Naive thymus-derived CD8-positive, alpha-beta T cell (primary cell): ENCODE measurements at regions of chr6 and their contacts with region 1.

Region 1: DNA sequence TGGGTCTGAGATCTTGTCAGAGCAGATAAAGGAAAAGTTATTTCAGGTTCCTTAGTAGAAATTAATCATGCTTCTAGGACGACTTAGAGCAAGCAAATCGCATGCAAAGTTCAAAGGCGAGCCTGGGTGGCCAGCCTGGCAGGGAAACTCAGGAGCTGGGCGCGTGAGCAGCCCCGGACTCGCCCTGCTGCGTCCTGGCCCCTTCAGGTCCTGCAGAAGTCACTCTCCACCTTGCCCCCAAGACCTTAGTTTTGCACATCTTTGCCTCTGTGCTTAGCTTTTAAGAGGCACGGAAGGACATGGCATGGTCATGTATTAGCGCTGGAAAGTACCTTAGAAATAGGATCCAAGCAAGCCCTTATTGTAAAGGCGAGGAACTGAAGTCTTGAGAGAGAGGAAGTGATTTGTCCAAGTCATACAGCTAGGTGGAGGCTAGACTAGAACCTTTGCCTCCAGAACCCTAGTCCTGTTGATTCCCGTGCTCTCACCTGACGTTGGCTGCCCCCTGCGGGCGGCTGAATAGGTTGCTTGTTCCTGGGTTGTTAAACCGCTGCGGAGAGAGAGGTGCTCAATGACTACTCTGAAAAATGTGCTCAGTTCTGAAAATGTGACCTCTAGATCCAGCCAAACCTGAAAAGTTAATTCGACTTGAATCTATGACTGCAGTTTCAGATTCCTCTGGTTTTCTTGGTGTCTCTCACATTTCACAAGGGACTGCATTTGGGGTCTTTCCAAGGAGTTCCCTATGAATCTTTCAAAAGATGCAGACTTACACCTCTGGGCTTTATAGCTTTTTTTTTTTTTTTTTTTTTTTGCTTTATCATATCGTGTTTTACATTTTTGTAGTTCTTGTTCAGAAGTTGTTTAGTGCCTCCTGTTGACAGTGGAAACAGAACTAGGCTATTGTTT is 2.7 kb downstream of the MYB start:
- DNase-seq: peak; percentile 59 to 86 (median 69)
- ATAC-seq: peak; percentile 30 to 44
- H3K4me3 Mint-ChIP-seq: peak overlapping the region; percentile 82 to 98 (median 94)
- H3K27ac Mint-ChIP-seq: peak overlapping the region; percentile 75 to 96 (median 91)
- H3K4me1 Mint-ChIP-seq: peaks cover 14 to 30% (median 20%) of the 10 kb centered on the region in 4 donors
- H3K27me3 Mint-ChIP-seq: no peaks in the 10 kb centered on the region

Region 2: DNA sequence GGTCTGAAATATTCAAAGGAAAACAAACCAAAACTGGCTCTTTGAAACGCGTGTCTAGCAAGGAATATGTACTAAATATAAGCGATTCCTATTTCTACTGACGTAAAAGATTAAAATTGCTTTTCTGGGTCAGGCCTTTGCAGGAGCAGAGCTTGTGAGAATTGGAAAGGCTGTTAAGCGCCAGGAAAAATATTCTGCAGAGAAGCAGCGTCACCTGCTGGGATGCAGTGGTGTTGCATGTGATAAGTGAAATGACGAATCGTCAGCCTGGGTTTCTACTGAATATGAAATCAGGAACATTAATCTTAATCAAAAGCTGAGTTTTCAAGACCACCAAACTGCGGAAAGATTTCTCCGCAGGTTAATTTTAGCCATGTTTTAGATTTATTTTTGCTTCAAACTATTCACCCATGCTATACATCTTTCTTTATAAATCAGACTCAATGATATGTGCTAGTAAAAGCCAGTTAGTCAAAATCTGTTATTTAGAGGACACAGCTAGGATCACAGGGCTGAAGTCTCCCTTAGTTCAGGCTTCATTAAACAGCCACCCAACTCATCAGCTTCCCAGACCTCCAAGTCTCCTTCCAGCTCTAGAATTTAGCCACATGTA is 301.3 kb before region 1 on chr6:
- POLR2A ChIA-PET with region 1: no interaction called
- DNase-seq: peak in 8 of 10 donors; percentile 23 to 74 (median 51)
- ATAC-seq: peak; percentile 41 to 43
- H3K4me3 Mint-ChIP-seq: no peak overlapping the region
- H3K27ac Mint-ChIP-seq: no peak overlapping the region
- H3K4me1 Mint-ChIP-seq: no peaks in the 10 kb centered on the region
- H3K27me3 Mint-ChIP-seq: peaks cover 0 to 18% (median 11%) of the 10 kb centered on the region in 5 donors

Region 3: DNA sequence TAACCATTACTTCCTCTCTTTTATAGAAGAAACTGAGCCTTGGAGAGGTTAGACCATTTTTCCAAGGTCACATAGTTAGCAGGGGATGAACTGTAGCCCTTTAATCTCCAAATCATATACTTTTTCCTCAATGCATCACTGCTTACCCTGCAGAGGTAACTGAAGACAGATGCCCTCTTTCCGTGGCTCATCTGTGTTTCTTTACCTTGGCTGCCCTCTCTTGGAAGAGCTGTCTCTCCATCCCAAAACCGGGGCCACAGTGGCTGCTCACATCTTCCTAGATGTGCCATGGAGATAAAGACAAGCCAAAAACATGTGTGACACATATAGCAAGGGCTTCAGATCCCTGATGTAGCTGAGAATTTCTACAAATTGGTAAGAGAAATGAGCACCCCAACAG is 233.3 kb before region 1 on chr6:
- POLR2A ChIA-PET with region 1: no interaction called
- DNase-seq: no peak
- ATAC-seq: no peak
- H3K4me3 Mint-ChIP-seq: no peak overlapping the region
- H3K27ac Mint-ChIP-seq: peak overlapping the region in 1 of 10 donors; percentile 46
- H3K4me1 Mint-ChIP-seq: peaks cover 0 to 4% (median 0%) of the 10 kb centered on the region in 4 donors
- H3K27me3 Mint-ChIP-seq: no peaks in the 10 kb centered on the region

Region 4: DNA sequence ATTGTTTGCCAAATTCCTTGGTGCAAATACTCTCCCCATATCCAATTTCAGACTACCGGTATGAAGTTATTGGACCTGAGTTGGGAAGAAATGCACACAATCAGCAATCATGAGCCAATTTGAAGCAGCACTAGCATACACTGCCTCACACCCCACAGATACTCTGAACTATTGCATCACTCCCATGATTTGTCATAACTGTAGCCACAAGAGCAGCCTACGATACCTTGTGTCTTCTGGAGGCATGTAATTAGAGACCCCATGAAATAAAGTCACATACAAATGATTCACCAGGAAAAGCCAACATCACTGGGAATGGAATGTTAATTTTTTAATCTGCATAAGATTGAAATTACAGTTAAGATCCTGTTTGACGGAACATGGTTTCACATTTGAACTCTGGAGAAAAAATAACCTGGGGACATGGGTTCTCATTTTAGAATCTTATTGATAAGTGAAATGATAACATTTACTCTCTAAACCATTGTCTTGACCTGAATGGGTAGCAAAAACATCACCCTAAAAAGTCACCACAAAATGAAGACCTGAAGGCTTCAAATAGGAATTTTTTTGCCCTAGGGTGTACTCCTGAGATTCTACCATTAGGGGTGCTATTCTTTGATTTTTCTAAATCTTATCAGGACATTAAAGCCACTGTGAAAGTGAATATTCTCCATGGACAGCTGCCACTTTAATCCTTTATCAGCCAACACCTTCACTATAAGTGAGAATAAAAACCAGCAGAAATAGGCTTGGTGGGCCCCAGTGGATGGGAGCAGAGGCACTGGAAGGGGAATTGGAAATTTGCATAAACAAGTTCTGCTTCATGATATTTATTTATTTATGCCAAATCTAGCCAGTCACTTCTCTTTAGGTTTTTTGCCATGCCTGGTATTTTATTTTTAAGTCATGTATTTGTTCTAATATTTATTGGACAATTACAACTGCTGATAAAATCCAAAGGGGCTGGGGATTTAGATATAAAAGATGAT is 94.7 kb before region 1 on chr6:
- POLR2A ChIA-PET with region 1: interaction called, 26 read pairs
- DNase-seq: peak in 1 of 10 donors; percentile 21
- ATAC-seq: peak; percentile 25 to 34
- H3K4me3 Mint-ChIP-seq: peak overlapping the region; percentile 42 to 80 (median 51)
- H3K27ac Mint-ChIP-seq: peak overlapping the region; percentile 39 to 98 (median 94)
- H3K4me1 Mint-ChIP-seq: peaks cover 36 to 92% (median 81%) of the 10 kb centered on the region in 4 donors
- H3K27me3 Mint-ChIP-seq: no peaks in the 10 kb centered on the region

Region 5: DNA sequence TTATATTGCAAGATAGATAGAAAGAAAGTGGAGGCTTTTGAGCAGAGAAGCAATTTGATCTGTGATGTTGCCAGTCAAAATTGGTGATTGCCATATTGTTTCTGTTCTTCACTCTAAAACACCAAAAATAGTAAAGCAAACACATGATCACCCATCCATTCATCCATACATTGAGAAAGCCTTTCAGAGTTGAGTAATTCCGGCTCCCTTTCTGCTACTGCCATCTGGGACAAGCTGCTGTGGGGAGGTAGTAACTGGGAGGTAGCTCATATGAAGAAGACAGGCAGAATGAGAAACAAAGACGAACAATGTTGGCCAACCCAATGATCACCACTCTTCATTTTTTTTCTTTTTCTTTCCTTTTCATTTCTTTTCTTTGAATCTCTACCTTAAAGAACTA is 78.1 kb before region 1 on chr6:
- POLR2A ChIA-PET with region 1: interaction called, 14 read pairs
- DNase-seq: no peak
- ATAC-seq: no peak
- H3K4me3 Mint-ChIP-seq: peak overlapping the region in 1 of 10 donors; percentile 47
- H3K27ac Mint-ChIP-seq: peak overlapping the region in 9 of 10 donors; percentile 50 to 95 (median 88)
- H3K4me1 Mint-ChIP-seq: peaks cover 32 to 76% (median 59%) of the 10 kb centered on the region in 4 donors
- H3K27me3 Mint-ChIP-seq: no peaks in the 10 kb centered on the region

Region 6: DNA sequence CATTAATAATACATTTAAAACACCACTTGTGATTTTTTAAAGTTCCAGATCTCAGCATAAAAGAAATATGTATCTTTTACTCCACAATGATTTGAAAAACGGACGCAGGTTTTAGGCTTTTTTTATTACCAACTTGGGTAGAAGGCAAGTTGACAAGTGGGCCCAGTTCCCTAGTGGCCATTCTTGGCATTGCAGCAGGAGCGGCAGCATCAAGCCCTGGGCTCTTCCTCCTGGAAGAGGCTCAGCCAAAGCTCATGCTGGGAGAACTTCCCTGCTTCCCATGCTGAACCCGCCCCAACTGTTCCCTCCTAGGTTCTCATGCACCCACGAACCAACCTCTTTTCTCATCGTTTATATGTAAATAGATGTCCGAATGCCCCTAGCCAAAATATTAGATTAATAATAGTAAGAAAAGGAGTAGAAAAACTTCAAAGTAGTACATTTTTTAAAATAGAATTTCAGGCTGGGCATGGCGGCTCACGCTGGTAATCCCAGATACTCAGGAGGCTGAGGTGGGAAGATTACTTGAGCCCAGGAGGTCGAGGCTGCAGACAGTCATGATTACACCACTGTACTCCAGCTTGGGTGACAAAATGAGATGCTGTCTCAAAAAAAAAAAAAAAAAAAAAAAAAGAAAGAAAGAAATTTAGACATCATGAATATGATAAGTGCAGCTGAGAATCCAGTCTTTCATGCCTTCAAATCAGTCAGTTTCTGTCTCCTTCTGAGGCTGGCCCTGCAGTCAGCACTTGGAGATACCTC is 20.9 kb before region 1 on chr6:
- POLR2A ChIA-PET with region 1: interaction called, 23 read pairs
- DNase-seq: peak in 2 of 10 donors; percentile 19 to 22
- ATAC-seq: no peak
- H3K4me3 Mint-ChIP-seq: peak overlapping the region in 9 of 10 donors; percentile 1 to 52 (median 38)
- H3K27ac Mint-ChIP-seq: peak overlapping the region in 9 of 10 donors; percentile 61 to 86 (median 80)
- H3K4me1 Mint-ChIP-seq: peaks cover 13 to 39% (median 29%) of the 10 kb centered on the region in 4 donors
- H3K27me3 Mint-ChIP-seq: no peaks in the 10 kb centered on the region